ENCODE measurements at regions of chr4 and their contacts with region 1.

Region 1: GRCh38 chr4:70901984-70902576 is at the start of gene MOB1B:
- DNase-seq: peak; percentile 77
- ATAC-seq: peak; percentile 94
- H3K4me3 ChIP-seq: peak within 1 kb of the TSS; percentile 90 to 97 (median 94)
- H3K27ac ChIP-seq: peak within 1 kb of the TSS; percentile 70
- H3K4me1 ChIP-seq: peaks cover 17% of the 10 kb centered on the region
- H3K27me3 ChIP-seq: no peaks in the 10 kb centered on the region; a peak in 1 of 5 replicates
- CTCF ChIP-seq: peak; percentile 48
- EP300 ChIP-seq: no peak
- POLR2A ChIP-seq: peak; percentile 43 to 82; a peak in 3 of 4 replicates
- RAD21 ChIP-seq: 0 out of 2 replicates have a peak, but pooled peaks have one; percentile 8
- total RNA-seq, gene MOB1B: 4.0 and 6.8 TPM in 2 replicates

Region 2: DNA sequence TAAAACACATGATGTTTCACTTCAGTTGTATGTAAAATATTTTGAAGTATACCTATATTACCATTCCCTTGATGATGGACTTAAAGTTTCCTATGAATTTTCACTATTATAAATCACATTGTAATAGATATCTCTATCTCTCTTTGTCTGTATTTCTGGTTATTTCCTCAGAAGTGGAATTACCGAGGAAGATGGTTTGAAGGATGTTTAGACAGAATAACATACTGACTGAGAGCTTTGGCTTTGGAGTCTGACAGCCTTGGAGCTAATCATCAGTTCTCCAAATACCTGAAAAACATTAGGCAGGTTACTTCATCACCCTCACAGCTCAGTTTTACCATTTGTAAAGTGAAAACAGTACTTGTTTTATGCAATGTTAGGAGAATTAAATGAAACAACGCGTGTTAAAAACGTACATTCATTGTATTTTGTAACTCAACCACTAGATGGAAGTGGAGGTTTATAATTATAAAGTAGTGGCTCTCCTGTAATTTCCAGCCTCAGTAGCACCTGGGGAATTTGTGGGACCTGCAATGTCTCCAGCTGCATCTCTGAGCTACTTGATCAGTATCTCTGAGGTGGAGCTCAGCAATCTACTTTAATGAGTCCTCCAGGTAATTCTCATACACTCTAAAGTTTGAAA is 250.1 kb before region 1 on chr4:
- CTCF ChIA-PET with region 1: no interaction called
- POLR2A ChIA-PET with region 1: no interaction called
- in situ Hi-C with region 1: no loop called
- intact Hi-C with region 1: loop called (anchors 10 kb)
- DNase-seq: peak; percentile 27
- ATAC-seq: peak; percentile 79
- H3K4me3 ChIP-seq: no peak overlapping the region; a peak in 1 of 6 replicates
- H3K27ac ChIP-seq: no peak overlapping the region
- H3K4me1 ChIP-seq: peaks cover 7% of the 10 kb centered on the region; the same call in 1 of the 2 replicates
- H3K27me3 ChIP-seq: peaks cover 0 to 3% of the 10 kb centered on the region in 2 experiments; a peak in 1 of 5 replicates
- CTCF ChIP-seq: peak; percentile 70
- EP300 ChIP-seq: no peak
- POLR2A ChIP-seq: no peak
- RAD21 ChIP-seq: peak; percentile 58

Region 3: DNA sequence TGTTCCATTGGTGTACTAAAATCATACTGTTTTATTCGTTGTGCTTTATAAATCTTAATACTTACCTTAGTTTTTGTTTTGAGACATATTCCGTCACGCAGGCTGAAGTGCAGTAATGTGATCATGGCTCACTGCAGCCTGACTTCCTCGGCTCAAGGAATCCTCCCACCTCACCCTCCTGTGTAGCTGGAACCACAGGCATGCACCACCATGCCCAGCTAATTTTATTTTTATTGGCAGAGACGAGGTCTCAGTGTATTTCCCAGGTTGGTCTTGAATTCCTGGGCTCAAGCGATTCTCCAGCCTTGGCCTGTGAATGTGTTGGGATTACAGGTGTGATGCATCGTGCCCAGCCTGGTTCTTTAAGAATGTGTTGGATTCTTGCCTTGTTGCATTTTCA is 67.0 kb after region 1 on chr4:
- CTCF ChIA-PET with region 1: no interaction called
- POLR2A ChIA-PET with region 1: interaction called, 9 read pairs
- in situ Hi-C with region 1: no loop called
- intact Hi-C with region 1: loop called (anchors 1 kb)
- DNase-seq: no peak
- ATAC-seq: no peak
- H3K4me3 ChIP-seq: no peak overlapping the region
- H3K27ac ChIP-seq: no peak overlapping the region
- H3K4me1 ChIP-seq: peaks cover 20% of the 10 kb centered on the region
- H3K27me3 ChIP-seq: no peaks in the 10 kb centered on the region
- CTCF ChIP-seq: no peak
- EP300 ChIP-seq: no peak
- POLR2A ChIP-seq: no peak
- RAD21 ChIP-seq: no peak

Region 4: GRCh38 chr4:70993181-70994068 is 91.3 kb after region 1 on chr4 and contains the start of gene DCK:
- CTCF ChIA-PET with region 1: no interaction called
- POLR2A ChIA-PET with region 1: interaction called, 11 read pairs
- in situ Hi-C with region 1: no loop called
- intact Hi-C with region 1: loop called (anchors 1 kb)
- DNase-seq: peak; percentile 85
- ATAC-seq: peak; percentile 93
- H3K4me3 ChIP-seq: peak within 1 kb of the TSS; percentile 67 to 92 (median 89)
- H3K27ac ChIP-seq: peak within 1 kb of the TSS; percentile 83
- H3K4me1 ChIP-seq: peaks cover 43% of the 10 kb centered on the region
- H3K27me3 ChIP-seq: no peaks in the 10 kb centered on the region
- CTCF ChIP-seq: peak; percentile 25; the same call in 1 of the 2 replicates
- EP300 ChIP-seq: peak; percentile 8 to 13; a peak in 2 of 4 replicates
- POLR2A ChIP-seq: peak; percentile 81 to 82
- RAD21 ChIP-seq: peak; percentile 57; the same call in 1 of the 2 replicates
- total RNA-seq, gene DCK: 21.8 and 33.5 TPM in 2 replicates